Body of pancreas (tissue), 4 donors: ENCODE measurements at regions of chr17 and their contacts with region 1.

Region 1: DNA sequence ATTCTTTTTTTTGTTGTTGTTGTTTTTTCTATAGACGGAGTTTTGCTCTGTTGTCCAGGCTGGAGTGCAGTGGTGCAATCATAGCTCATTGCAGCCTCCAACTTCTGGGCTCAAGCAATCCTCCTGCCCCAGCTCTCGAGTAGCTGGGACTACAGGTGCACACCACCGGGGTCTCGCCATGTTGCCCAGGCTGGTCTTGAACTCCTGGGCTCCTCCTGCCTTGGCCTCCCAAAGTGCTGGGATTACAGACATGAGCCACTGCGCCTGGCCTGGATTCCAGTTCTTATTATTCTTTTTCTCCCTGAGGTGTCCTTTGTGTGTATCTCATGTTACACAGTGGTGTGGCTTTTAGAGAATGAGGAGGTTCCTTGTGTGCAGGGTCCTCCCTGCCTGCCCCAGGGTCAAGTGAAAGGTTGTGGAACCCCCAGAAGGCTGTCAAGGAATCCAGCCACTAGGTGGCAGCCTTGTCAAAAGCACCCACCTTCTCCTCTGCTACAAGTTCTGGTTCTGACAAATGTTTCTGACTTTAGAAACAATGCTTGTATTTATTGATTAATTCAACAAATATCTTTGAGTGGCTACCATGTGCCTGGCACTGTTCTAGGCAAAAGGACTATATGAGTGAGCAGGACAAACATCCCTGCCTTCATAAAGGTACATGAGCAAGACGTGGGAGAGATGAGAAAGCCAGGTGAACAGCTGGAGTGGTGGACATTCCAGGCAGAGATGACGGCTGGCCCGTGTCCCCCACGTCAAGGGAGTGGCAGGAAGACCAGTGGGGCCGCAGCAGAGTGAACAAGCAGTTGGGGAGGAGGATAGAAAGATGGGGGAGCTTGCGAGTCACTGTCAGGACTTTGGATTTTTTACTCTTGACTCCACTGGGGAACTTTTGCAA is 112.4 kb downstream of the SPECC1 start:
- DNase-seq: peak; percentile 62 to 75 (median 70)
- ATAC-seq: peak; percentile 47
- H3K4me3 ChIP-seq: no peak overlapping the region
- H3K27ac ChIP-seq: no peak overlapping the region
- H3K4me1 ChIP-seq: peaks cover 5% of the 10 kb centered on the region
- H3K27me3 ChIP-seq: no peaks in the 10 kb centered on the region
- CTCF ChIP-seq: peak; percentile 74 to 85 (median 82)
- POLR2A ChIP-seq: no peak

Region 2: DNA sequence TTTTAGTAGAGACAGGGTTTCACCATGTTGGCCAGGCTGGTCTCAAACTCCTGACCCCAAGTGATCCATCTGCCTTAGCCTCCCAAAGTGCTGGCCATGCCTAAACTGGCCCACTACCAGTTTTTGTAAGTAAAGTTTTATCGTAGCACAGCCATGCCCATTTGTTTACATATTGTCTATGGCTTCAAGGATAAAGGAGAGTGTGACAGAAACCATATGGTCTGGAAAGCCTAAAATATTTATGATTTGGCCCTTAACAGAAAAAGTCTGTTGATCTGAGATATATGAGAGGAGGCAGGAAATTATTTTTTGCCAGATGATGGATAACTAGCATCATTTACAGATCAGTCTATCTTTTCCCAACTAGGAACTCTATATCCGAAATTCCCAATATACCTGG is 148.4 kb before region 1 on chr17:
- intact Hi-C with region 1: no loop called
- DNase-seq: no peak
- ATAC-seq: no peak
- H3K4me3 ChIP-seq: no peak overlapping the region
- H3K27ac ChIP-seq: no peak overlapping the region
- H3K4me1 ChIP-seq: peaks cover 22% of the 10 kb centered on the region
- H3K27me3 ChIP-seq: no peaks in the 10 kb centered on the region
- CTCF ChIP-seq: no peak
- POLR2A ChIP-seq: no peak

Region 3: GRCh38 chr17:19992803-19993713 is 128.5 kb before region 1 on chr17:
- intact Hi-C with region 1: loop called (anchors 5 kb)
- DNase-seq: peak; percentile 91 to 95 (median 94)
- ATAC-seq: peak; percentile 99
- H3K4me3 ChIP-seq: no peak overlapping the region
- H3K27ac ChIP-seq: no peak overlapping the region
- H3K4me1 ChIP-seq: peaks cover 4% of the 10 kb centered on the region
- H3K27me3 ChIP-seq: no peaks in the 10 kb centered on the region
- CTCF ChIP-seq: peak; percentile 54 to 96 (median 89)
- POLR2A ChIP-seq: no peak

Region 4: DNA sequence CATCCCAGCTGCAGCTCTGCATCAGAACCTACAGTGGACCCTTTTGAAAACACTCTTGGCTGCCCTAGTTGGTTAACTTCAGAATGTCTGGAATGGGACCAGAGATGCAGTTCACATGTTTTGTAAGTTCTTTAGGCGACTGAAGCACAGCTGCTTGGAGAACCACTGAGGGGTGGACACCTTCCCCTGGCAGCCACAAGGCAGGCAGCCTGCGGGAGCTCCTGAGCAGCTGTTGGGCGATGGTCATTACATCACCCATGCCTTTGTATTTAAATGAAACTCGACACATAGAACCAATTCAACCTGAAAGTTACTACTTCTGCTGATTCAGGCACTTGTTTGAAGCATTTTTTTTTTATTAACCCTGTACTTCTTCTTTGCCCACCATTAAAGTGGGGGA is 194.2 kb after region 1 on chr17:
- intact Hi-C with region 1: loop called (anchors 5 kb)
- DNase-seq: no peak
- ATAC-seq: no peak
- H3K4me3 ChIP-seq: no peak overlapping the region
- H3K27ac ChIP-seq: no peak overlapping the region
- H3K4me1 ChIP-seq: peaks cover 6% of the 10 kb centered on the region
- H3K27me3 ChIP-seq: no peaks in the 10 kb centered on the region
- CTCF ChIP-seq: no peak
- POLR2A ChIP-seq: no peak